Mammary epithelial cell (primary cell): ENCODE measurements at regions of chr2 and their contacts with region 1.

Region 1: DNA sequence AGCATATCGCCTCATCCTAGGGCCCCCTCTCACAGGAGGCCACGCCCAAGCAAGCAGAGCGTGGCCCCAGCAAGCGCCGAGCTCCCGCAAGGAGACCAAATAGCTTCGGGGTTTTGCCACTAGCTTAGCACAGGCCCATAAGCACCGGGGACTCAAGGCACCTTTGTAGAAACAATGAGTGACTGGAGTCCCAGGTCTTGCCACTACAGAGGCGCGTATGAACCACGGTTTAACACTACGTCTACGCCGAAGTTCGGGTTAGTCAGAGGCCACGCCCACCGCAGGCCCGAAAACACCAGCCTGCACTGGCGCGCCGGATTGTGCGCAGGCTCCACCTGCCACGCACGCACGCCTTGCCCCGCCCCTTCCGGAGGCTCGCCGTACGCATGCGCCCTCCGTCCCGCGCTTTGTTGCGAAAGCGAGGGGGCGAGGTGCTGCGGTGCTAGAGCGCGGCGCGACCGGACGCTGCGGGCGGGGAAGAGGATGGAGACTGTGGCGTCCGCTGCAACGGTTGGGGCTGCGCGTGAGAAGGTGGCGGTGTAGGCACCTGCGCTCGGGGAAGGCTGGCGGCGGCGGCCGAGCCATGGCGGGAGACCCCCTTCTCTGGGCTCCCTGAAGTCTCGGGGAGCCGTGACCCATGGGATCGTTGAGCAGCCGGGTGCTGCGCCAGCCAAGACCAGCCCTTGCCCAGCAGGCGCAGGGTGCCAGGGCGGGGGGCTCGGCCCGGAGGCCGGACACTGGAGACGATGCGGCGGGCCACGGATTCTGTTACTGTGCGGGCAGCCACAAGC is at the start of gene GMCL1:
- DNase-seq: peak; percentile 95
- H3K4me3 ChIP-seq: peak within 1 kb of the TSS; percentile 76 to 96 (median 87)
- H3K27ac ChIP-seq: peak within 1 kb of the TSS; percentile 84
- H3K4me1 ChIP-seq: peaks cover 14% of the 10 kb centered on the region
- H3K27me3 ChIP-seq: no peaks in the 10 kb centered on the region
- CTCF ChIP-seq: no peak
- total RNA-seq, gene GMCL1: 10.7 to 11.5 TPM

Region 2: DNA sequence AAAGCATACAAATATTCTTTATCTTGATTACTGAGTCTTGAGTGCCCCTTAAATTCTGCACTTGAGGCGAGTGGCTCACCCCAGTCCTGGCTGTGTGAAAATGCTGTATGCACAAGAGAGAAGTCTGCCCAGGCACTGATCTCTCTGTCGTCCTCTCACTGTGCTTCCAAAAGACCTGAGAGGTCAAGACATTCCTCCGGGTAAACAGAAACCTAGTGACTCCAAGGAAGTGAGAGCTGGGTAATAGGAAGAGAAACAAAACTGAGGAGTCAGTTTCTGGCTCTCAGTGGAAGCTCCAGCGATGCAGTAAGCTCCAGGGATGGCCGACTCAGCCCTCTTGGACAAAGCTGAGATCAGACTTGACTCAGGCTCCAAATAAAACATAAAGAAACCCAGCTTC is 256.8 kb before region 1 on chr2:
- CTCF ChIA-PET with region 1: no interaction called
- dilution Hi-C with region 1: no loop called
- in situ Hi-C with region 1: no loop called
- intact Hi-C with region 1: loop called (anchors 10 kb)
- DNase-seq: peak; percentile 25
- H3K4me3 ChIP-seq: no peak overlapping the region
- H3K27ac ChIP-seq: no peak overlapping the region
- H3K4me1 ChIP-seq: peaks cover 21% of the 10 kb centered on the region
- H3K27me3 ChIP-seq: no peaks in the 10 kb centered on the region
- CTCF ChIP-seq: no peak

Region 3: DNA sequence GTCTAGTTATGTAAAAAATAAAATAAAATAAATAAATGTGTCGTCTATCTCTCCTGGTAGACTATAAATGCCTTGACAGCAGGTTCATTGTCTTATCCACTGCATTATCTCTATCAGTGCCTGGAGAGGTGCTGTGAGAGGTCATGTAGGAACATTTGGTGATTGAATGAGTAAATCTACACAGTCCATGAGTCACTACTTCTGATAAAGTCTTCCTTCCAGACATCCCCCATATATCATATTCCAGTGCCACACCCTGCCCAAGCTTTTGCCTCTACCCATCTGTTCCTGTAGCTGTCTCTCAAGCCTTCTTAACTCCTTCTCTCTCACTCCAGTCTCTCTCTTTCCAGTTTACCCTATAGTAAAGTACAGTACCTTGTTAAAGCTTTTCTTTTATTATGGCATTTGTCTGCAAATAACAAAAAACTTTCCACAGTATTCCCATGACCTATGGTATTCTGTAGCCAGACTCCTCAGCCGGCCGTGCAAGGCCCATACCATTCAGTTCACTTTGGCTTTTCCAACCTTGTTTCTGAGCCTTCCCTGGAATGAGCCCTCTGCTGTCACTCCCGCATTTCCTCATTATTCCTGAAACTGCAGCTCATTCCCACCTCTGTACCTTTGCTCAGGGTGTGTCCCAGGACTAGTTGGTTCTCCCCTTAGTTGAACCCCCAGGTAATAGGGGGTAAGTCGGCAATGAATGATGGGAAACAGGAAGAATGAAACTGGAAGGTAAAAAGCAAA is 50.0 kb before region 1 on chr2:
- CTCF ChIA-PET with region 1: no interaction called
- dilution Hi-C with region 1: loop called (anchors 5 kb)
- in situ Hi-C with region 1: no loop called
- intact Hi-C with region 1: no loop called
- DNase-seq: peak; percentile 64
- H3K4me3 ChIP-seq: no peak overlapping the region
- H3K27ac ChIP-seq: no peak overlapping the region
- H3K4me1 ChIP-seq: peaks cover 22% of the 10 kb centered on the region
- H3K27me3 ChIP-seq: no peaks in the 10 kb centered on the region
- CTCF ChIP-seq: no peak

Region 4: DNA sequence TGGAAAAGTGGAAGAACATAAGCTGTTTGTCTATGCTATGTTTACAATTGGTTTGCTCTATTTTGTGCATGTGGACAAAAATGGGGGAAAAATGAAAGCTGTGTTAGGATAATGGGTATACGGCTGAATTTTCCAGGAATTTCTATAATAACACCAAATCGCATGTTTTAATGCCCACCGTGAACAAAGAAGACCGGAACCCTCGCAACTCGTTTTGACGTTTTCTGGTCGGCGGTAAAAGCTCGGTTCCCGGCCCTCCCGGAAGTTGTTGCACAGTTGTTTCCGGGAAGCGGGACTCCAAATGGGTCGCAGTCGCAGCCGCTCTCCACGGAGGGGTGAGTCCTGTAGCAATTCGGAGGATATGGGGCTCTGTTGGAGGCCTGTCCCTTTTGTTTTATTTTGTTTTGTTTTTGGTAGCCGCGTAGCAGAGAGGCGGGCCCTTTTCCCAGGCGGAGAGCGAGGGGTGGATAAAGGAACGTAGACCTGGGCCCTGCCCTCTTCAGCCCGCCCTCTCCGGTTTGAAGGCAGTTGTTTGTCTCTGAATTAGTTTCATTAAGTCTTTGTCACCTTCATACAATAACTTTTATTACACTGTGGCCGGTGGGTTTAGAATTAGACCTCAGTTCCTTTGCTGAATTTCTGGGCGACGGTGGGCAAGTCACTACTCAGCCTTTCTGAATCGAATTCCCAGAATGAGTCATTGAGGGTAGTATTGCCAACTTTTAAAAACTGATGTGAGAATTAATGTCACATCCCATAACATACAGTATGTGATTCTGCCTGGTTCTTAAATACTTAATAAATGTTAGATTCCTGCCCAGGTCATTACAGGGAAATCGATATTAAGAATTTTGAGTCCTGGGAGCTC is 64.5 kb after region 1 on chr2 and contains the start of gene SNRNP27:
- CTCF ChIA-PET with region 1: no interaction called
- dilution Hi-C with region 1: no loop called
- in situ Hi-C with region 1: no loop called
- intact Hi-C with region 1: loop called (anchors 10 kb)
- DNase-seq: peak; percentile 71
- H3K4me3 ChIP-seq: peak within 1 kb of the TSS; percentile 59 to 96 (median 96)
- H3K27ac ChIP-seq: peak within 1 kb of the TSS; percentile 94
- H3K4me1 ChIP-seq: peaks cover 10% of the 10 kb centered on the region
- H3K27me3 ChIP-seq: no peaks in the 10 kb centered on the region
- CTCF ChIP-seq: no peak
- total RNA-seq, gene SNRNP27: 25.3 to 51.2 TPM

Region 5: GRCh38 chr2:70086838-70087701 is 257.6 kb after region 1 on chr2 and contains the start of gene PCBP1:
- CTCF ChIA-PET with region 1: no interaction called
- dilution Hi-C with region 1: no loop called
- in situ Hi-C with region 1: no loop called
- intact Hi-C with region 1: no loop called
- DNase-seq: peak; percentile 86
- H3K4me3 ChIP-seq: peak within 1 kb of the TSS; percentile 85 to 96 (median 86)
- H3K27ac ChIP-seq: peak within 1 kb of the TSS; percentile 99
- H3K4me1 ChIP-seq: peaks cover 36% of the 10 kb centered on the region
- H3K27me3 ChIP-seq: no peaks in the 10 kb centered on the region
- CTCF ChIP-seq: no peak
- total RNA-seq, gene PCBP1: 47.2 to 258 TPM

Region 6: DNA sequence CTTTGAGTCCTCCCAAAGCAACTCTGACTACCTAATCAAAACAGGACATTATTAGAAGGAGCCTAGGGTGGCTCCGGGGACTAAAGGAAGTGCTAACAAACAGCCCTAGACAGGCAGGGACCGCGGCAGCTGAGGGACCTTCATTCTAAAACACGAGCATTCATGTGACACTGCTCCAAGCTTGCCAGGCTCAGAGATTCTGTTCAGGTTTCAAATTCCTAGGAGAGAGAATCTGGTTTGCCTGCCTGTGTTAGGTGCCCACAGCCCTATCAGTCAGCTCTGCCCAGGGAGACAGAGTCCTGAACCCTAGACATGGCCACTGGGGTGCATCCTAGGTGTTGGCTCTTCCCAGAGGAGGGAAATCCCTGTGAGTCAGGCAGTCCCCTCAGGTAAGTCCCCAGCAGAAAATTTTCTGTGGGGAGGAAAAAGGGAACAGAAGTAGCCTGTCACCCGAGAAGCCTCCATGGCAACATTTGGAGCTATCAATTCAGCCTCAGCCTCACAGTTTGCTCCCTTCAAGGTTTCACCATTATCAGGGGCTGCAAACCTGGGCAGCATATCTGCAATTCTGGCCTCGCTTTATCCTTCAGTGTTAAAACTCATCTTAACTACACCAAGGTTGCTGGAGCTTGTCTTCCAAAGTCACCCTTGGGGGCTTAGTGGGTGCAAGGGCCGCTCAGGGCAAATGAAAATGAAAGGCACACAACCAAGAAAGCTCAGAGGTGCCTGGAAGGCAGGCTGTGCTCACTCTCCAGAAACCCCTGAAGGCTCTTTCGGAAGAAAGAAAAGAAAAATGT is 286.4 kb after region 1 on chr2:
- CTCF ChIA-PET with region 1: interaction called, 19 read pairs
- dilution Hi-C with region 1: no loop called
- in situ Hi-C with region 1: no loop called
- intact Hi-C with region 1: no loop called
- DNase-seq: no peak
- H3K4me3 ChIP-seq: no peak overlapping the region
- H3K27ac ChIP-seq: no peak overlapping the region
- H3K4me1 ChIP-seq: peaks cover 4% of the 10 kb centered on the region
- H3K27me3 ChIP-seq: no peaks in the 10 kb centered on the region
- CTCF ChIP-seq: no peak

Region 7: GRCh38 chr2:70132244-70133126 is 303.0 kb after region 1 on chr2:
- CTCF ChIA-PET with region 1: no interaction called
- dilution Hi-C with region 1: no loop called
- in situ Hi-C with region 1: no loop called
- intact Hi-C with region 1: no loop called
- DNase-seq: peak; percentile 45
- H3K4me3 ChIP-seq: peak overlapping the region in 2 of 3 experiments; percentile 18 to 29
- H3K27ac ChIP-seq: peak overlapping the region; percentile 65
- H3K4me1 ChIP-seq: peaks cover 30% of the 10 kb centered on the region
- H3K27me3 ChIP-seq: no peaks in the 10 kb centered on the region
- CTCF ChIP-seq: no peak